ENCODE measurements at regions of chr4 and their contacts with region 1.

Region 1: DNA sequence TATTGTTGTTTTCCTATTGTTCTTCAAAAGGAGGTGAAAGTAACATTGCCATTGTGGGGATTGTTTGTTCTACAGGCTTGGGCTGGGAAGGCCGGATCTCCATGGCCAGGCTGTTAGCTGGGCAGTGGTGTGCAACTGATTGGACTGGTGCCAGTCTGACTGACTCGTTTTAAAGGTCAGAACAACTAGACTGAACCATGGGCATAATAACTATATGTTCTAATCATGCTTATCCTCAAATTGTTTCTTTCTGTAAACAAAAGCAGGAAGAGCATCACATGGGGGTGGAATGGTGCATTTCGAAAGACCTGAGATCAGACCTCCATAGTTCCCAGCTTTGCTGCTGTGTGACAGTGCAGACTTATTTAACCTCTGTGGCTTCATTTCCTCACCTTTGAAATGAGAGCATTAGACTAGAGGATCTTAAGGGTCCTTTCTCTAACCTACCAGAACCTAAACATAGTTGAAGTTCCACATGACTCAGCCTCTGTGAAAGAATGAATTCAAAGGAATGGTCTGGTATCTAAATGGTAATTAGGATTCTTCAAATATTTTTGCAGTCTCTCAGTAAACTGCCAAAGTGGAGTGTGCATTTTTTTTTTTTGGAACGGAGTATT is 66.7 kb upstream of the PGRMC2 start:
- DNase-seq: peak; percentile 97
- ATAC-seq: peak; percentile 71
- H3K4me3 ChIP-seq: no peak overlapping the region
- H3K27ac ChIP-seq: peak overlapping the region; percentile 99
- H3K4me1 ChIP-seq: peaks cover 41% of the 10 kb centered on the region
- H3K27me3 ChIP-seq: no peaks in the 10 kb centered on the region
- CTCF ChIP-seq: no peak
- POLR2A ChIP-seq: no peak
- RAD21 ChIP-seq: no peak

Region 2: DNA sequence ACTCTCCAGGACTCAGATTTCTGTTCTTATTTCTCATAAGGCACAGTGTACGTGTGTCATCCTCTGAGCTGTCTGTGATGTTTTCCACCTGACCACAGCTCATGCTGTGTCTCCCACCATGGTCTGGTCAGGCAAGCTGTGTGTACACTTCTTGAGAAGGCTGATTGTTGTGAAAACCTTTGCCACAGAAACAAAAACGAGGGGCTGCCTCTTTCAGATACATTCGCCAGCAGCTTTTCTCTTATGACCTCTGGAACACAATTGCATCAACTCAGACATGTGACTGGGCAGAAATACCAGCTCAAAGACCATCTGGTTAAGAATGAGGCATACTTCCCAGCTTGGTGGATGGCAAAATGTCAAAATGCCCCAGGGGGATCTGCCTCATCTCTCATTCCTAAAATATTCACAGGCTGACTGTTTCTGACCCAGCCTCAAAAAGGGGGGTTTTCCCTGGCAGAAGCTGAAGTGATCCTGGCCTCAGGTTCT is 112.8 kb before region 1 on chr4:
- CTCF ChIA-PET with region 1: no interaction called
- POLR2A ChIA-PET with region 1: no interaction called
- dilution Hi-C with region 1: no loop called
- in situ Hi-C with region 1: no loop called
- intact Hi-C with region 1: loop called (anchors 1 kb)
- DNase-seq: peak; percentile 99
- ATAC-seq: peak; percentile 87
- H3K4me3 ChIP-seq: no peak overlapping the region
- H3K27ac ChIP-seq: peak overlapping the region; percentile 95
- H3K4me1 ChIP-seq: peaks cover 19% of the 10 kb centered on the region
- H3K27me3 ChIP-seq: no peaks in the 10 kb centered on the region
- CTCF ChIP-seq: no peak
- POLR2A ChIP-seq: no peak
- RAD21 ChIP-seq: 0 out of 2 replicates have a peak, but pooled peaks have one; percentile 12

Region 3: DNA sequence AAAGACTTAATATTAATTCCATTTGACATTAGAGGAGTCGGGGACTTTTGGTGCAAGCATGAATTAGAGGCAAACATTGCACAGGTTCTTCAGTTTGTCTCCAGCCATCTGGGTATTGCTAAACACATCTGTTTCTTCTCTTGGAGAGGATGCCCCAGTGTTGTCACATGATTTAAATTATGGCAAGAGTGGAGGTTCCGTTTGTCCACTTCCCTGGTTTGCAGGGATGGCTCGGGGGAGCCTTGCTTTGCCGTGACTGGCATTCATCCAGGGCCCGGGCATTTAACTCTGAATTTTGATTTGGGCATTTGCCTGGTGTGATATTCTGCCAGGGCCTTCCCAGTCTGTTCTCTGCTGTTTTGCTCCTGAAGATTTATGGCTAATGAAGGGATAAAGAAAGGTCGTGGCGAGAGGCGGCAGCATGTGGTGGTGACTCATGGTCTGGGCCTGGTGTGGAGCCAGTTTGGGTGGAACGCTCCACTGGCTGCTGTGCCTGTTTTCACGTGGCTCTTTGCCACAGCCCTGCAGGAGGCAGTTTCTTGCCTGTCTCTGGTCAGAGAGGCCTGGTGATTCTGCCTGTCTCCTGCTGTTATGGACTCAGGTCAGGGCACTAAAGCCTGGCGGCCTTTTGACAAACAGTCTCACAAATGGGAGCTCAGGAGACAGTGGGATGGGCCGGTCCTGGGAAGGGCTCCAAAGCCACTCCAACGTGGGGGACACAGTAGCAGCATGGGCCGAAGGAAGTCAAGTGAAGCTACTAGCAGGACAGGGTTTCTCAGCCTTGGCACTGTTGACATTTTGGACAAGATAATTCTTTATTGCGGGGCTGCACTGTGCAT is 32.7 kb after region 1 on chr4:
- CTCF ChIA-PET with region 1: no interaction called
- POLR2A ChIA-PET with region 1: no interaction called
- dilution Hi-C with region 1: no loop called
- in situ Hi-C with region 1: no loop called
- intact Hi-C with region 1: loop called (anchors 1 kb)
- DNase-seq: peak; percentile 97
- ATAC-seq: peak; percentile 68
- H3K4me3 ChIP-seq: no peak overlapping the region
- H3K27ac ChIP-seq: peak overlapping the region; percentile 91
- H3K4me1 ChIP-seq: peaks cover 34% of the 10 kb centered on the region
- H3K27me3 ChIP-seq: no peaks in the 10 kb centered on the region
- CTCF ChIP-seq: 0 out of 2 replicates have a peak, but pooled peaks have one; percentile 18
- POLR2A ChIP-seq: peak; percentile 53
- RAD21 ChIP-seq: peak; percentile 29

Region 4: DNA sequence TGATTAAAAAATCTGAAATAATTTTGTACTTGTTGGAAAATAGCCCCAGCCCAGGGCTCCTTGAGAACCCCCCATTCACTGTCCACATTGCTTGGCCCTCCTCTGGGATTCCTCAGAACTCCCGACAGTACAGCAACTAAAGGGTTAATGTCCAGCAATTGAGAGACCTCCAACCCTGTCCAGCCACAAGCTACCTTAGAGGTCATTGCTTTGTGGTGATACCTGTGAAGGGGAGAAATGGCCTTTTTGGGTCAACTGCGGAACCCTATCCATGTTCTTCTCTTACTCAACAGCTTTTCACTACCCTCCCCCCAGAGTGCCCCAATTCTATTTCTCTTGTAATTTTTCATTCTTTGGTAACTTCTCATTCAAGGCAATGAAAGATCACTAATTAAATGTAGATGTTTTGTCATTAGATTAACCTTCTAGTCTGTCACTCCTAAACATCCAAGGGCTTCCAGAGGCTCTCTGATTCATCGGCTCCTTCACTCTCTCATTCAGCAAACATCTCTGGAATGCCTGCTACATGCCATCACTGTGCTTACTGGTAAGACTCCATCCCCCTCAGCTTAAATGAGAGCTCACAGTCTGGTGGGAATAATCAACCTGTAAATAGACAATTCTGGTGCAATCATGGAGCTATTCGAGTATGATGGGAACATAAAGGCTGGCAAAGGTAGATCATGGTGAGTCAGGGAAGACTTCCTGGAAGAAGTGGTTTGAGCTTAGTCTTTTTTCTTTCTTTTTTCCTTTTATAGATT is 174.7 kb after region 1 on chr4:
- CTCF ChIA-PET with region 1: no interaction called
- POLR2A ChIA-PET with region 1: no interaction called
- dilution Hi-C with region 1: no loop called
- in situ Hi-C with region 1: no loop called
- intact Hi-C with region 1: loop called (anchors 10 kb)
- DNase-seq: peak; percentile 99
- ATAC-seq: peak; percentile 94
- H3K4me3 ChIP-seq: no peak overlapping the region
- H3K27ac ChIP-seq: peak overlapping the region; percentile 97
- H3K4me1 ChIP-seq: peaks cover 25% of the 10 kb centered on the region
- H3K27me3 ChIP-seq: no peaks in the 10 kb centered on the region
- CTCF ChIP-seq: no peak
- POLR2A ChIP-seq: no peak
- RAD21 ChIP-seq: peak; percentile 17; the same call in 1 of the 2 replicates

Region 5: DNA sequence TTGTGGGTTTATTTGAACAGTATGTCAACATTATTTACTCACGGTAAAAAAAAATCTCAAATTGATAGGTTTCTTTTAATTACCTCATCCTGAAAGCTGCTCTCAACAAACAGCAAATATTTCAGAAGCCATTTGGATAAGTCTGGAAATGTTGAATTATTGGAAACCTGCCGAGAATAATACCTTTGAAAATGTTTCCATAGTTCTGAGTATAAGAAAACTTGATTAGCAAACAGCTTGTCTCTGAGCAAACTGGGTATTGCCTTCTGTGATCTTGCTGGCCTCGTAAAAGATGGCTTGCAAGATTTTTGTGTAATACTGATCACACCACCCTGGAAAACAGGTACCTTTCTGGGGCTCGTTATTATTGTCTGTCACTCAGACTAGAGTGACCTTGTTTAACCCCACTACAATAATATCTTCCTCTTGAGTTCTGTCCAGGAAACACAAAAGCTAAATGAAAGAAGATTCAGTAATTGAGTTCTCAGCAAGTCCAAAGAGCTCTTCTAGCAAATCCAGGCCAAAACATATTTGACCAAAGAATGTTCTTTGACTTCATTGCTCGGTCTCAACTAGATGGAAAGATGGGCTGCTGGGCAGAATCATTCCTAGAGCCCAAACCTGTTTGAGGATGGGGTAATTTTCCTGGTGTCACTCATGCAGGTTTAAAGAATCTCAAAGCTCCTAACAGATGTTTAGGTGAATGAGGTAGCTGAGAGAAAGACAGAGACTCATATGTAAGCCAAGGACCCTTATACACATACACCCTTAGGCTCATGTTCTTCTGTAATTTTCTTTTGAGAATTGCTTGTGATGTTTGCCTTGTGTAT is 199.6 kb after region 1 on chr4:
- CTCF ChIA-PET with region 1: interaction called, 3 read pairs
- POLR2A ChIA-PET with region 1: no interaction called
- dilution Hi-C with region 1: no loop called
- in situ Hi-C with region 1: no loop called
- intact Hi-C with region 1: loop called (anchors 2 kb)
- DNase-seq: no peak
- ATAC-seq: no peak; the same call in 1 of the 2 replicates
- H3K4me3 ChIP-seq: peak overlapping the region; percentile 53; the same call in 1 of the 2 replicates
- H3K27ac ChIP-seq: peak overlapping the region; percentile 88; the same call in 1 of the 2 replicates
- H3K4me1 ChIP-seq: peaks cover 14% of the 10 kb centered on the region
- H3K27me3 ChIP-seq: no peaks in the 10 kb centered on the region
- CTCF ChIP-seq: no peak
- POLR2A ChIP-seq: no peak
- RAD21 ChIP-seq: no peak

Region 6: DNA sequence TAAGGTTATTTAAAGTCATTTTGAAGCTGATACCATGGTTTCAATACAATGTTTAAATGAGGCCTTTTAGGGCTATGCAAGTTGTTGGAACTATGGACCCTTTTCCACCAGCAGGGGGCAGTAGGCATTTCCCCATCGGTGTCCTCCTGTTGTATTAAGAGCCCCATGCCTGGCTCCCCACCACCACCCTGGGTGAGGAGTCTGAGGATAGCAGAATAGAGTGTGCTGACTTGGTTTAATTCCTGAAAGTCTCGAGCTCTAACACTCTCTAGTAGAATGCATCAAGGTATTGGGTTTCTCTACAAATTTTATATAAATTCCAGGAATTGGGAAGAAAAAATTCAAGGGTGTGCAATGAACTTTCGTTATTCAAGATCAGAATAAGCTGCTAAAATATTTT is 220.4 kb after region 1 on chr4:
- CTCF ChIA-PET with region 1: no interaction called
- POLR2A ChIA-PET with region 1: no interaction called
- dilution Hi-C with region 1: no loop called
- in situ Hi-C with region 1: no loop called
- intact Hi-C with region 1: loop called (anchors 5 kb)
- DNase-seq: peak; percentile 68
- ATAC-seq: peak; percentile 25
- H3K4me3 ChIP-seq: no peak overlapping the region
- H3K27ac ChIP-seq: no peak overlapping the region
- H3K4me1 ChIP-seq: peaks cover 22% of the 10 kb centered on the region
- H3K27me3 ChIP-seq: no peaks in the 10 kb centered on the region
- CTCF ChIP-seq: peak; percentile 58
- POLR2A ChIP-seq: no peak
- RAD21 ChIP-seq: peak; percentile 55

Region 7: GRCh38 chr4:129240816-129241215 is 886.5 kb after region 1 on chr4:
- CTCF ChIA-PET with region 1: no interaction called
- POLR2A ChIA-PET with region 1: no interaction called
- dilution Hi-C with region 1: no loop called
- in situ Hi-C with region 1: no loop called
- intact Hi-C with region 1: no loop called
- DNase-seq: no peak
- ATAC-seq: no peak
- H3K4me3 ChIP-seq: no peak overlapping the region
- H3K27ac ChIP-seq: no peak overlapping the region
- H3K4me1 ChIP-seq: no peaks in the 10 kb centered on the region
- H3K27me3 ChIP-seq: no peaks in the 10 kb centered on the region
- CTCF ChIP-seq: no peak
- POLR2A ChIP-seq: no peak
- RAD21 ChIP-seq: no peak